Natural killer cell (primary cell): ENCODE measurements at regions of chr3 and their contacts with region 1.

Region 1: DNA sequence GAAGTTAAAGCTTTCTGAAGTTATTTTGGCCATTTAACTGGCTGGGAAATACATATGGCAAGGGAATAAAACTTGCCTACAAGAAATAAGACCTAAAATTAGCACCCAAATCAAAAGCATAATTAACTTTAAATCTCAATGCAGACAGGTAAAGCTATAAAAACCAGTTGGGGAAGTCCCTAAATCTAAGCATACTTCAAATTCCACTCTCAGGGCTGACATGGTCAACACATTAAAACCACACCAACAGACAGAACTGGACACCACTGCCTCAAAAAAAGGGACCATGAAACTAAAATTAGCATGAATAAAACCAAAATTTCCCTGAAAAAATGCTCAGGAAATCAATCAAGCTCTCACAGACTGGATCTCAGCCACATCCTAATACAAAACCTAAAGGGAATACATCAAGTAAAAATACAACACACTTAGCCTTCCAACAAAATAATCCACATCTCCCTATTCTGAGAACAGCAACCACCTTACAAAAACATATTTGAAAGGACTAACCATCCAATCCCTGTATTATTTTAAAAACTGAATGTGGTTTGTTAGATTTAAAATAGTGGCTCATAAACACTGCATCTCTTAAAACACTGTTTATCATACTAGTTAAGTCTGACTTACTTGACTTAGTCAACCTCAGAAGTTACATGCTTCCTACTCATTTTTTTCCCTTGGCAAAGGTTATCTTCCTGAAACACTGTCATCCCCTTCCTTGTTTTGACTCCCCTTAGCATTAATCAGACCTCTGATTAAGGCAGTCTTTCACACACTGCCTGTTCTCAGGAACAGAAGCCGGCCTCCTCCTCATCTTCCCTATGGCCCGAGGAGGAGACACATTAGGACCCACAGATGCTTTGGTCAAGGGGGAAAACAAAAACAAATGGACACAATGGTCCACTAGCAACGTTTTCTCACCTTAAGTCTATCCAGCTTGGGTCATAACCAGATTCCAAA is 8.3 kb downstream of the TRA2B start:
- DNase-seq: no peak
- ATAC-seq: peak in 1 of 3 donors; percentile 20
- H3K4me3 ChIP-seq: no peak overlapping the region
- H3K4me3 Mint-ChIP-seq: peak overlapping the region; percentile 80
- H3K27ac ChIP-seq: peak overlapping the region; percentile 46
- H3K27ac Mint-ChIP-seq: peak overlapping the region; percentile 80 to 100
- H3K4me1 ChIP-seq: peaks cover 22% of the 10 kb centered on the region
- H3K4me1 Mint-ChIP-seq: peaks cover 97 to 99% of the 10 kb centered on the region in 2 donors
- H3K27me3 ChIP-seq: no peaks in the 10 kb centered on the region
- H3K27me3 Mint-ChIP-seq: no peaks in the 10 kb centered on the region
- CTCF ChIP-seq: no peak

Region 2: DNA sequence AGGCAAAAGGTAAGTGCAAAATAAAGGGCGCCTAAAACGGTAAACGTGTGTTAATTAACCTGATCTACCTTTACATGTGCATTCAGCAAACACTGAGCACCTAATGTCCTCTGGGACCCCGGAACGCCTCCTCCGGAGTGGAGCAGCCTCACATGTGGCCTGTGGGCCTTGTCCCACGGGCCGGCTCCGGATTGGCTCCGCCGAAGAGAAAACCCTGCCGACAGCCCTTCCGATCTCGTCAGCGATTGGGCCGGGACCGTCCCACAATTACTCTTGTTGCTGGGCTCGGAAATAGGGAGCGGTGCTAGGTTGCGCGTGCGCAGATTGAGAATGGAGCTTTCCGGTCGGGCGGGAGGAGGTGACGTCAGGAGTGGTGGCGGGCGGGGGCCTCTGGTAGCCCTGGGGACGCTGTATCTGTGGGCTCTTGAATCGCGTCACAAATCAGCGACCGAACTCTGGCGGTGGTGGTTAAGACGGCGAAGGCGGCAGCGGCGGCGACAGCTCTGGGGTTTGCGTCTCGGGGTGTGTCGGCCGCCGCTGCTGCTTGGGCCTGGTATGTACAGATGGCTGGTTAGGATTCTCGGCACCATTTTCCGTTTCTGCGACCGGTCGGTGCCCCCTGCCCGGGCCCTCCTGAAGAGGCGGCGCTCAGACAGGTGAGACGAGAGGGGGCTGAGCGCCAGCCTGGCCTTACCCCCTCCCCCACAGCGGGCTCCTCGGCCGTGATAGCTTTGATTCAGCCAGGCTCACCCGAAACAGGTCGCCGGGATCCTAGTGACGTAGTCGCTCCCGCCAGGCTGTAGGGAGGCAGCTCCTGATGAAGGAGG is 343.4 kb before region 1 on chr3 and contains the start of gene SENP2:
- intact Hi-C with region 1: loop called (anchors 5 kb)
- DNase-seq: peak; percentile 100
- ATAC-seq: peak; percentile 80 to 93 (median 85)
- H3K4me3 ChIP-seq: peak within 1 kb of the TSS; percentile 98
- H3K4me3 Mint-ChIP-seq: peak within 1 kb of the TSS; percentile 92
- H3K27ac ChIP-seq: peak within 1 kb of the TSS; percentile 99
- H3K27ac Mint-ChIP-seq: peak within 1 kb of the TSS; percentile 93 to 98
- H3K4me1 ChIP-seq: peaks cover 40% of the 10 kb centered on the region
- H3K4me1 Mint-ChIP-seq: peaks cover 47 to 50% of the 10 kb centered on the region in 2 donors
- H3K27me3 ChIP-seq: no peaks in the 10 kb centered on the region
- H3K27me3 Mint-ChIP-seq: no peaks in the 10 kb centered on the region
- CTCF ChIP-seq: no peak
- total RNA-seq, gene SENP2: 57.8 to 59.8 (median 58.7) TPM

Region 3: GRCh38 chr3:185914911-185915629 is 14.4 kb before region 1 on chr3:
- intact Hi-C with region 1: loop called (anchors 2 kb)
- DNase-seq: no peak
- ATAC-seq: peak in 1 of 3 donors; percentile 9
- H3K4me3 ChIP-seq: no peak overlapping the region
- H3K4me3 Mint-ChIP-seq: no peak overlapping the region
- H3K27ac ChIP-seq: no peak overlapping the region
- H3K27ac Mint-ChIP-seq: peak overlapping the region; percentile 73 to 81
- H3K4me1 ChIP-seq: no peaks in the 10 kb centered on the region
- H3K4me1 Mint-ChIP-seq: peaks cover 28 to 34% of the 10 kb centered on the region in 2 donors
- H3K27me3 ChIP-seq: no peaks in the 10 kb centered on the region
- H3K27me3 Mint-ChIP-seq: no peaks in the 10 kb centered on the region
- CTCF ChIP-seq: no peak